GM10248 (cell line): ENCODE measurements at regions of chr7 and their contacts with region 1.

Region 1: DNA sequence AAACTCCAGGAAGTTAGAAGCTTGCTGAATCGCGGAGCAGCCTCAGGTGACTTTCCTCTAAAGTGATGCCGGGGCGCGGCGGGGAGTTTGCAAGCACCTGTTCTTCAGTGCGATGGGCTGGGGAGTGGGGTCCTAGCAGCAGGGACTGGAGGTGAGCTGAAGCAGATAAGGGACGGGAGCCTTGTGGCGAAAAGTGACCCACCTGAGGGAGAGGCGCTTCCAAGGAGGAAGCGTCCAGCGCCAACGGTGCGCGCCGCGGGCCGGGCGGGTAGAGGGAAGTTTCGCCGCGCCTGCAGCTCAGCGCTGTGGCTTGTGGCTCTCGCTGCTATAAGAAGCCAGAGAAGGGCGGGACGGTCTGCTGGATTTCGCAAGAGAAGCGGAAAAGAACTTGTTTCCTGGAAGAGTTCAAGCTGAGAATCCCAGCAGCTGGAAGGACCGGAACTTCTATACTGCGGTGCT is at the start of gene STEAP4:
- DNase-seq: no peak
- CTCF ChIP-seq: no peak

Region 2: DNA sequence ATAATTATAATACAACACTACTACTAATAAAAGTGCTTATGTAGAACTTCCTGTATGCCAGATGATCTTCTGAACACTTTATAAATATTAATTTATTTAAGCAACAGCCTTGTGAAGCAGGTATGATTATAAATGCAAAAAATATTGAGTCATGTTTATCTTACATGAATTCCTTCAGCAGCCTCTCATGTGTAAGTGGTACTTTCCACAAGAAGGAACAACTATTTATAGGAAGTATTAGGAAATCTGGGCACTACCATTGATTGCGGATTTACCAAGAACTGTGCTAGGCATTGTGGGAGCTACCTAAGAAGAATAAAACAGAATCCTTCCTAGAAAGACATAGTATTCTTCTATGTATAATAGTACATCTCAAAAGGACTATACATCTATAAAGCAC is 10.8 kb after region 1 on chr7:
- CTCF ChIA-PET with region 1: interaction called, 10 read pairs
- POLR2A ChIA-PET with region 1: no interaction called
- DNase-seq: no peak
- CTCF ChIP-seq: no peak

Region 3: DNA sequence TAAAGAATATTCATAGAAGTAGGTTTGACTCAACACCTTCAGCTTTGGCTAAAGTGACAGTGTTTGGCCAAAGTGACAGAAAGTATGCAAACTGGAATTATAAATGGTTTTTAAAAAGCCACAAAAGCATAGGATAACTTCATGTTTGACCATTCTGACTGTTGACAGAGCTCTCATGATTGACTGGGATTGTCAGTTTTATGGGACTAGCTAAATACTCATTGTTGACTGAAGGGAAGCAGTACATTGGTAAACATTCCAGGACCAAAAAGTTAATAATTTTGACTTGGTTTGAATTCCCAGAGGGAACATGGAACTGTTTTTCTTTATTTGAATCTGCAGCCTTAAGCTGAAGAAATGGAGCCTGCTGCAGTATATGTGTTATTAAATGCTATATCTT is 84.6 kb after region 1 on chr7:
- CTCF ChIA-PET with region 1: no interaction called
- POLR2A ChIA-PET with region 1: no interaction called
- DNase-seq: no peak
- CTCF ChIP-seq: no peak

Region 4: DNA sequence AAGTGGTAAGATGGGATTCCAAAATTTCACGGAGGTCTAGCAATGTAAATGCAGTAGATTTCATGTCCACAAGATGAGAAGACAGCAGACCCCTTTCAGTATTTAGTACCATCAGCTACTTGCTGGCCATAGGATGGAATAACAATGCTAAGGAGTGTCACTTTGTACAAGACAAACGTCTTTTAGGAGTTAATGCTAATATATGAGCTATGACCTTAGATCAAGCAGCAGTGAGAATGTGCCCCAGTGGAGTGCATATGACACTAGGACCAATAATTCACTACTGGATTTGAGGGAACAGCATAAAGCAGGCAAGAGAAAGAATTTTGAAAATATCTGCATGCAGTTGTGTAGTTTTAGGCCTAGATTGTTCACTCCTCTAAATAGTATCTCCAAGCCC is 270.1 kb after region 1 on chr7:
- CTCF ChIA-PET with region 1: no interaction called
- POLR2A ChIA-PET with region 1: no interaction called
- DNase-seq: no peak
- CTCF ChIP-seq: no peak